GM12878 (cell line): ENCODE measurements at regions of chr6 and their contacts with region 1.

Region 1: GRCh38 chr6:159252955-159253508 is 83.8 kb downstream of the FNDC1 start:
- DNase-seq: peak; percentile 2
- ATAC-seq: peak; percentile 80
- H3K4me3 ChIP-seq: no peak overlapping the region
- H3K27ac ChIP-seq: no peak overlapping the region
- H3K4me1 ChIP-seq: no peaks in the 10 kb centered on the region
- H3K27me3 ChIP-seq: no peaks in the 10 kb centered on the region
- CTCF ChIP-seq: peak; percentile 46 to 57 (median 47); a peak in 5 of 6 replicates
- EP300 ChIP-seq: no peak
- POLR2A ChIP-seq: no peak
- RAD21 ChIP-seq: peak; percentile 46

Region 2: GRCh38 chr6:158843751-158844683 is 409.0 kb before region 1 on chr6:
- CTCF ChIA-PET with region 1: no interaction called
- POLR2A ChIA-PET with region 1: no interaction called
- RAD21 ChIA-PET with region 1: no interaction called
- SMC1A ChIA-PET with region 1: no interaction called
- in situ Hi-C with region 1: no loop called
- intact Hi-C with region 1: no loop called
- DNase-seq: no peak
- ATAC-seq: peak; percentile 26
- H3K4me3 ChIP-seq: no peak overlapping the region
- H3K27ac ChIP-seq: no peak overlapping the region
- H3K4me1 ChIP-seq: no peaks in the 10 kb centered on the region
- H3K27me3 ChIP-seq: no peaks in the 10 kb centered on the region; a peak in 1 of 4 replicates
- CTCF ChIP-seq: no peak
- EP300 ChIP-seq: no peak
- POLR2A ChIP-seq: no peak
- RAD21 ChIP-seq: no peak

Region 3: GRCh38 chr6:159174263-159174969 is 78.6 kb before region 1 on chr6:
- CTCF ChIA-PET with region 1: interaction called, 26 read pairs
- POLR2A ChIA-PET with region 1: no interaction called
- RAD21 ChIA-PET with region 1: no interaction called
- SMC1A ChIA-PET with region 1: interaction called, 3 read pairs
- in situ Hi-C with region 1: no loop called
- intact Hi-C with region 1: no loop called
- DNase-seq: peak; percentile 2
- ATAC-seq: peak; percentile 98
- H3K4me3 ChIP-seq: no peak overlapping the region
- H3K27ac ChIP-seq: no peak overlapping the region
- H3K4me1 ChIP-seq: no peaks in the 10 kb centered on the region
- H3K27me3 ChIP-seq: peaks cover 8 to 19% of the 10 kb centered on the region in 2 experiments
- CTCF ChIP-seq: peak; percentile 91 to 96 (median 96)
- EP300 ChIP-seq: no peak
- POLR2A ChIP-seq: no peak
- RAD21 ChIP-seq: peak; percentile 96

Region 4: DNA sequence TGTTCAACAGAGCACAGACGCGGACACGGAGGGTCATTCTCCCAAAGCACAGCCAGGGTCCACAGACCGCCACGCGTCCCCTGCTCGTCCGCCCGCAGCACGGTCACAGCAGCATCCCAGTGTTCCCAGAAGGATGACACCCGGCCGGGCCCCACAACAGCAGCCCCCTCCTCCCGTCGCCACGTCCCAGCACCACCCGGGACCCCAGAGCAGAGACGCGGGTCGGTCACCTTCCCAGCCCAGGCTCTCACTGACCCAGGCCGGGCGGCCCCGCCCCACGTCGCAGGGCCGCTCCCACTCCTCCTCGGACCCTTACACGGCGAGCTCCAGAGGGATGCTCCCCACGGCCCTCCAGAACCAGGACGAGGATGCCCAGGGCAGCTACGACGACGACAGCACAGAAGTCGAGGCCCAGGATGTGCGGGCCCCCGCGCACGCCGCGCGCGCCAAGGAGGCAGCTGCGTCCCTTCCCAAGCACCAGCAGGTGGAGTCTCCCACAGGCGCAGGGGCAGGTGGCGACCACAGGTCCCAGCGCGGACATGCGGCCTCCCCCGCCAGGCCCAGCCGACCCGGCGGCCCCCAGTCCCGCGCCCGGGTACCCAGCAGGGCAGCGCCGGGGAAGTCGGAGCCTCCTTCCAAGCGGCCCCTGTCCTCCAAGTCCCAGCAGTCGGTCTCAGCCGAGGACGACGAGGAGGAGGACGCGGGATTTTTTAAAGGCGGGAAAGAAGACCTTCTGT is 19.5 kb before region 1 on chr6:
- CTCF ChIA-PET with region 1: interaction called, 15 read pairs
- POLR2A ChIA-PET with region 1: no interaction called
- RAD21 ChIA-PET with region 1: no interaction called
- SMC1A ChIA-PET with region 1: no interaction called
- in situ Hi-C with region 1: no loop called
- intact Hi-C with region 1: no loop called
- DNase-seq: no peak
- ATAC-seq: no peak
- H3K4me3 ChIP-seq: no peak overlapping the region
- H3K27ac ChIP-seq: no peak overlapping the region
- H3K4me1 ChIP-seq: no peaks in the 10 kb centered on the region
- H3K27me3 ChIP-seq: peaks cover 3 to 4% of the 10 kb centered on the region in 2 experiments; a peak in 3 of 4 replicates
- CTCF ChIP-seq: no peak
- EP300 ChIP-seq: no peak
- POLR2A ChIP-seq: no peak
- RAD21 ChIP-seq: no peak

Region 5: DNA sequence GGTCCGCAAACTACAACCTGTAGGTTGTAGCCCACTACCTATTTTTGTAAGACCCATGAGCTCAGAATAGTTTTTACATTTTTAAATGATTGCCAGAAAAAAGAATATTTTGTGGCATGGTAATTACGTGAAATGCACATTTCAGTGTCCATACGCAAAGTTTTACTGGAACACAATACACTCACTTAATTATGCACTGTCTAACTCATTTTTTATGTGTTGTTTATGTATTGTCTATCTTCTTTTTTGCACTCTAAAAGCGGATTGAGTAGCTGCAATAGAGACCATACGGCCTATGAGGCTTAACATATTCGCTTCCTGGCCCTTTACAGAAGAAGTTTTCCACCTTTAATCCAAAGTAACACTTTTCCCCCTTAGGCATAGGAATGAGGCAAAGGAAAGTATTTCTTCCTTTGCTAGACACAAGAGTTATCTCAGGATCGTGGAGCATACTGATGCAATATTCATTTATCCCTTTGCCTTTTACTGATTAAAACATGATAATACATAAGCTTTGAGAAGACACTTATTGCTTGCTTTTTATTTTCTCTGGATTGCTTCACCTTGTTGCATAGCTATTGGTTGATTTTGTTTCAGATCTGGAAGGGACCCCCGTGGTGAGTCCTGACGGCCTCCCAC is 14.0 kb before region 1 on chr6:
- CTCF ChIA-PET with region 1: interaction called, 16 read pairs
- POLR2A ChIA-PET with region 1: no interaction called
- RAD21 ChIA-PET with region 1: interaction called, 4 read pairs
- SMC1A ChIA-PET with region 1: interaction called, 3 read pairs
- in situ Hi-C with region 1: no loop called
- intact Hi-C with region 1: no loop called
- DNase-seq: no peak
- ATAC-seq: no peak
- H3K4me3 ChIP-seq: no peak overlapping the region
- H3K27ac ChIP-seq: no peak overlapping the region
- H3K4me1 ChIP-seq: no peaks in the 10 kb centered on the region
- H3K27me3 ChIP-seq: peaks cover 2 to 3% of the 10 kb centered on the region in 2 experiments; a peak in 3 of 4 replicates
- CTCF ChIP-seq: no peak
- EP300 ChIP-seq: no peak
- POLR2A ChIP-seq: no peak
- RAD21 ChIP-seq: no peak

Region 6: GRCh38 chr6:159595173-159595572 is 342.1 kb after region 1 on chr6:
- CTCF ChIA-PET with region 1: no interaction called
- POLR2A ChIA-PET with region 1: interaction called, 10 read pairs
- RAD21 ChIA-PET with region 1: no interaction called
- SMC1A ChIA-PET with region 1: no interaction called
- in situ Hi-C with region 1: no loop called
- intact Hi-C with region 1: no loop called
- DNase-seq: no peak
- ATAC-seq: no peak
- H3K4me3 ChIP-seq: no peak overlapping the region
- H3K27ac ChIP-seq: no peak overlapping the region
- H3K4me1 ChIP-seq: no peaks in the 10 kb centered on the region
- H3K27me3 ChIP-seq: no peaks in the 10 kb centered on the region
- CTCF ChIP-seq: no peak
- EP300 ChIP-seq: no peak
- POLR2A ChIP-seq: no peak
- RAD21 ChIP-seq: no peak

Region 7: GRCh38 chr6:159608961-159609651 is 356.1 kb after region 1 on chr6:
- CTCF ChIA-PET with region 1: interaction called, 12 read pairs
- POLR2A ChIA-PET with region 1: no interaction called
- RAD21 ChIA-PET with region 1: no interaction called
- SMC1A ChIA-PET with region 1: no interaction called
- in situ Hi-C with region 1: no loop called
- intact Hi-C with region 1: no loop called
- DNase-seq: no peak
- ATAC-seq: peak; percentile 78
- H3K4me3 ChIP-seq: no peak overlapping the region
- H3K27ac ChIP-seq: no peak overlapping the region
- H3K4me1 ChIP-seq: no peaks in the 10 kb centered on the region
- H3K27me3 ChIP-seq: no peaks in the 10 kb centered on the region
- CTCF ChIP-seq: peak; percentile 65 to 73 (median 70)
- EP300 ChIP-seq: no peak
- POLR2A ChIP-seq: no peak
- RAD21 ChIP-seq: peak; percentile 90

Region 8: DNA sequence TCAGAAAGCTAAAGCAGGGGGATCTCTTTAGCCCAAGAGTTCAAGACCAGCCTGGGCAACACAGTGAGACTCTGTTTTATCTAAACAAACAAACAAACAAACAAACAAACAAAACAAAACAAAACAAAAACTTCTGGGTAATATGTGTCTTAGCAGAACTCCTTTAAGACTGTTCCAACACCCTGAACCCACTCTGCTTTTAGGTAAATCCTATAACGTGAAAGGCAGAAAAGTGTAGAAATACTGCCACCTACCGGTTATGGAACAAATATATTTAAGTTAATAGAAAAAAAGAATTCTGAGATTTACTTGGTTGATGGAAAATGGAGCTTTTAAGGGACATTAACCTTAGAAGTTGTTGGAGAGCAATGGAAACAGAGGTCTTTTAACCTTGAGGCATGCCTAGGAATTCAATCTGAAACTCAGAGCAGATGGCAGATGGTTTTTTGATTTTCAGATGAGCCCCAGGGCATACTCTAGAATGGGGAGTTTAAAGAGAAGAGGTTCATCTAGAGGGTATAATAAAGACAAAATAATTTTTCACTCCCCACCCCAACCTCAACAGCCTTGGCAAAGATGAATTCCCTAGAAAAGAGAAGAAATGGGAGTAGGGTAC is 401.6 kb after region 1 on chr6:
- CTCF ChIA-PET with region 1: interaction called, 34 read pairs
- POLR2A ChIA-PET with region 1: no interaction called
- RAD21 ChIA-PET with region 1: interaction called, 14 read pairs
- SMC1A ChIA-PET with region 1: interaction called, 14 read pairs
- in situ Hi-C with region 1: no loop called
- intact Hi-C with region 1: loop called (anchors 2 kb)
- DNase-seq: peak; percentile 12
- ATAC-seq: peak; percentile 74
- H3K4me3 ChIP-seq: no peak overlapping the region
- H3K27ac ChIP-seq: no peak overlapping the region
- H3K4me1 ChIP-seq: no peaks in the 10 kb centered on the region
- H3K27me3 ChIP-seq: no peaks in the 10 kb centered on the region
- CTCF ChIP-seq: peak; percentile 42 to 62 (median 49); a peak in 5 of 6 replicates
- EP300 ChIP-seq: no peak
- POLR2A ChIP-seq: no peak
- RAD21 ChIP-seq: peak; percentile 71